Thyroid gland (tissue), 4 donors: ENCODE measurements at regions of chr22 and their contacts with region 1.

Region 1: DNA sequence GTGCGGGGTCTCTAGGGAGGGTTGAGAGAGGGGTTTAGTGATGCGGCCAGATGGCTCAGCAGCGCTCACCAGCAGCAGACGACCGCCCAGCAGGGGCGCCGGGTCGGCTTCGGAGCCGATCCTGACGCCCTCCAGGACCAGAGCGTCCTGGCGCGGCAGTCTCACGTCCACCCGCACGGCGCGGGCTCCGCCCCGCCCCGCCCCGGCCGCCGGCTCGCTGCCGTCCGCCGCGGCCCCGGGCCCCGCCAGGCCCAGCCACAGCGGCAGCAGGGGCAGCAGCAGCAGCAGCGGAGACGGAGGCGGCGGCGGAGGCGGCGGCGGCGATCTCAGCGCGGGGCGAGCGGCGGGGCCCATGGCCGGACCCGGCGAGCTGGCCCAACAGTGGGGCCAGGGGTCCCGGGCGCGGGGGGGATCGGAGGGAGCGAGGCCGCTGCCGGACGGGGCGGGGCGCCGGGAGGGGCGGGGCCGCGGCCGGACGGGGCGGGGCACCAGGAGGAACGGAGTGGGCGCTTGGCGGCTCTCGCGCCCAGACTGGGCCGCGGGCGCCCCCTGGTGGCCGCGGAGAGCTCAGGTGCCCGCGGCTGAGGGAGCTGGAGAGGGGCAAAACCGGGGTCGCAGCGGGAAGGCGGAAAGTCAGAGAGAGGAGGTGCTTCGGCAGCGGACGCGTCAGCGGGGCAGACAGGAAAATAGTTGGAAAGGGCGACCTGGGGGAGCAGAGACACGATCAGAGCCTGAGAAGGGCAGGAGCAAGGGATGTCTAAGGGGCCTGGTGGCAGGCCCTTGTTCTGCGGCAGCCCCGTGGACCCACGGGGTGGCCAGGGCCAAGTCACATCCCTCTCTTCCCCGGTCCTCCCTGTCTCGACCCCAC is at the start of gene RNF215:
- DNase-seq: peak; percentile 77 to 79
- H3K4me3 ChIP-seq: peak within 1 kb of the TSS in 1 of 3 donors; percentile 46
- H3K27ac ChIP-seq: peak within 1 kb of the TSS in 1 of 3 donors; percentile 15
- H3K4me1 ChIP-seq: peaks cover 7 to 13% of the 10 kb centered on the region in 2 donors
- H3K27me3 ChIP-seq: no peaks in the 10 kb centered on the region
- CTCF ChIP-seq: peak; percentile 69 to 99 (median 90)
- POLR2A ChIP-seq: peak in 1 of 2 donors; percentile 30
- total RNA-seq, gene RNF215: 14.8 to 25.5 (median 18.8) TPM

Region 2: DNA sequence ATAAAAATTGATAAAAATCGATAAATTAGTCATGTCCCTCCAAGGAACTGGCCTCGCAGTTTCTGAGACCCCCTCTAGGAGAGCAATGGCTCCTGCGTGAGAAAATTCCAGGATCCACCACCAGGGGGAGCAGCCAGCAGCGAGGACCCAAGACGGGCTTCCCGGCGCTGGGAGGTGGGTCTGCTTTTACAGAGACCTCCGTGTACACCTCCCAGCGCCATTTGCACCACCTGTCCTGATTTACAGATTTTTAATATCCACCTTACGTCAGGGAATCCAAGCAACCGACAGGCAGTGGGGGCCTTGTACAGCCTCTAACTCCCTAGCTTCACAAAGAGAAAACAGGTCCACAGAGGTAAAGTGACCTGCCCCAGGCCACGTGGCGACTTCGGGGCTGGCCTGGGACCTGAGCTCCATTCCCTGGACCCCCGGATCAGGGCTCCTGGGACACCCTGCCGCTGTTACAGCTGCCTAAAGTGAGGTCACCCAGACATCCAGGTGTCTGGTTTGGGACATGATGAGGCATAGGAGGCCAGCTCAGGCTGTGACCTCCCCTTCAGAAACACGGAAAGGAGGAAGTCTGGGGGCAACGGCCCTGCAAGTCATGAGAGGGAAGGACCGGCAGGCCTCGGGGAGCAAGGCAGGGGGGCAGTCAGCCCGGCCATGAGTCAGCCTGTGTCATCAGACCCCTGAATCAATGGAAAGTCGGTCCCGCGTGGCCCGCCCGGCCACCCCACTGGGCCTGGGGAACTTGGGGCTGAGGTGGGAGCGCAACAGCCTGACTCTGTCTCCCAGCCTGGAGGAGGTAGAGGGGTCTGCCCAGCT is 124.1 kb before region 1 on chr22:
- intact Hi-C with region 1: loop called (anchors 2 kb)
- DNase-seq: peak; percentile 68 to 70
- H3K4me3 ChIP-seq: no peak overlapping the region
- H3K27ac ChIP-seq: no peak overlapping the region
- H3K4me1 ChIP-seq: peaks cover 4 to 6% of the 10 kb centered on the region in 2 donors
- H3K27me3 ChIP-seq: no peaks in the 10 kb centered on the region
- CTCF ChIP-seq: peak; percentile 90 to 98 (median 95)
- POLR2A ChIP-seq: no peak

Region 3: DNA sequence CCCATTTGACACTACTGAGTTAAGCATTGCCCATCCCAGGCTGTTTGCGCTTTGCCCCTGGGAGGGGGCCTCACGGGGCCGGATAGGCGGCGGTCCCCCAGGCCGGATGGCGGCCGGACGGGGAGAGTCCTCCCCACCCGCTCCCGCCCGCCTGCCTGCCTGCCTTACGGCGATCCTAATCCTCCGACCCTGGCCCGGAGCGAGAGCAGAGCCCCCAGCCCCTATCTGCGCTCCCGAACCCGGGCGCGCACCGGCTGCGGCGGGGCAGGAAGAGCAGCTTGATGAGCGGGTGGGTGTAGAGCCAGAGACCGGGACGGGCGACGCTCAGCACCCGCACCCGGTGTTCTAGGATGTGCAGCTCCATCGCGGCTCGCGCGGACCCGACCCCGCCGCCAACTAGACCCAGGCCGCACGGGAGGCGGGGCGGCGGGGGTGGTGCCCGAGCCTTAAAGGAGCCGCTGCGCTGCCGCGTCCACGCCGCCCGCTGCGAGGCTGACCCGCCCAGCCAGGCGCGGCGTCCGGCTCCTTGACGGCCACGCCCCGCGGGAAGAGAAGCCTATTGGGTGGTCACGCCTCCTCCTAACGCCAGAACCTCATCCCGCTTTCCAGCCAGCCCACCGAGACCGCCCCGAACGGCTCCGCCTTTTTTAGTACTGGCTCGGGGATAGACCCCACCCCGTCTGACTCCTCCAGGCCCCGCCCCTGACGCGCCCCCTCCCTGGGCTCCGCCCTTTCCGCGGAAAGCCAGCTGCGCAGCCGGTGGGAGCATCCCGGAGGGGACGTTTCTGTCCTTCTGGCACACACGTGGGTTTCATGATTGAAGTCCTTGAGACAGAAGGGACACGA is 97.8 kb before region 1 on chr22 and contains the start of gene CASTOR1:
- intact Hi-C with region 1: loop called (anchors 1 kb)
- DNase-seq: peak; percentile 100
- H3K4me3 ChIP-seq: peak within 1 kb of the TSS; percentile 92 to 99 (median 96)
- H3K27ac ChIP-seq: peak within 1 kb of the TSS; percentile 96 to 97 (median 97)
- H3K4me1 ChIP-seq: peaks cover 33 to 38% of the 10 kb centered on the region in 2 donors
- H3K27me3 ChIP-seq: no peaks in the 10 kb centered on the region
- CTCF ChIP-seq: no peak
- POLR2A ChIP-seq: peak in 1 of 2 donors; percentile 87
- total RNA-seq, gene CASTOR1: 16.5 to 36.0 (median 27.7) TPM

Region 4: GRCh38 chr22:30326706-30327362 is 60.4 kb before region 1 on chr22 and contains the start of gene TBC1D10A:
- intact Hi-C with region 1: loop called (anchors 5 kb)
- DNase-seq: peak; percentile 97 to 99
- H3K4me3 ChIP-seq: peak within 1 kb of the TSS; percentile 44 to 99 (median 89)
- H3K27ac ChIP-seq: peak within 1 kb of the TSS; percentile 59 to 84 (median 59)
- H3K4me1 ChIP-seq: peaks cover 28 to 43% of the 10 kb centered on the region in 2 donors
- H3K27me3 ChIP-seq: no peaks in the 10 kb centered on the region
- CTCF ChIP-seq: peak in 1 of 6 experiments; percentile 1
- POLR2A ChIP-seq: peak; percentile 53 to 90
- total RNA-seq, gene TBC1D10A: 28.4 to 44.7 (median 35.9) TPM

Region 5: DNA sequence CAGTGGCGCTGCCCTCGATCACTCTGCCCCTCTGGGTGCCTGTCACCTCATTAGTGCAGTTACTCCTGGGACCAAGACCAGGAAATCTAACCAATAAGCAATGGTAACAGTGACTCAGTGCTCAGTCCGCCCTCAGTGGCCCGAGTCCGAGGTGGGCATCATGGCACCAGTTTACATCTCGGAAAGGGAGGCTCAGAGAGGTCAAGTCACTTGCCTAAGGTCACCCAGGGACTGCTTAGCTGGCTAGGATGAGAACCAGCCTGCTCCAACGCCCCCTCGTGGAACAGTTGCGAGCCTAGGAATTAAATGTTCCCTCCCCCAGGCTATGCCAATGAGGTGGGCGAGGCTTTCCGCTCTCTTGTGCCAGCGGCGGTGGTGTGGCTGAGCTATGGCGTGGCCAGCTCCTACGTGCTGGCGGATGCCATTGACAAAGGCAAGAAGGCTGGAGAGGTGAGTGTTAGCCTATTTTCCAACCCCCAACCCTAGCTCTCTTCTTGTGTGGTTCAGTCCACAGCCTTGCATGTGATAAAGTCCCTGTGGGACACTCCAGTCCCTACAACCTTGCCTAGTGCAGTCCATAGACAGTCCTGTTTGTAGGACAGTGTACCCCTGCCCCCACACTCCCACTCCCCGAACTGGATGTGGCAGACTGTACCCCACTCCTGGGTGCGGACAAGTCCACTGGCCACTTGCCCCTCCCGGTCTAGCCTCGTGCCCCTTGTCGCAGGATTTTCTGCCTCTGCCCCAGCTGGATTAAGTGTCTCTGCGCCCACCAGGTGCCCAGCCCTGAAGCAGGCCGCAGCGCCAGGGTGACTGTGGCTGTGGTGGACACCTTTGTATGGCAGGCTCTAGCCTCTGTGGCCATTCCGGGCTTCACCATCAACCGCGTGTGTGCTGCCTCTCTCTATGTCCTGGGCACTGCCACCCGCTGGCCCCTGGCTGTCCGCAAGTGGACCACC is 39.5 kb after region 1 on chr22:
- intact Hi-C with region 1: loop called (anchors 5 kb)
- DNase-seq: peak; percentile 90 to 92
- H3K4me3 ChIP-seq: peak overlapping the region in 2 of 3 donors; percentile 62 to 82
- H3K27ac ChIP-seq: peak overlapping the region; percentile 71 to 86 (median 78)
- H3K4me1 ChIP-seq: peaks cover 25 to 38% of the 10 kb centered on the region in 2 donors
- H3K27me3 ChIP-seq: no peaks in the 10 kb centered on the region
- CTCF ChIP-seq: peak in 4 of 6 experiments; percentile 73 to 81 (median 79)
- POLR2A ChIP-seq: peak in 1 of 2 donors; percentile 19

Region 6: GRCh38 chr22:30485362-30485988 is 98.3 kb after region 1 on chr22:
- intact Hi-C with region 1: loop called (anchors 5 kb)
- DNase-seq: peak; percentile 57 to 66
- H3K4me3 ChIP-seq: no peak overlapping the region
- H3K27ac ChIP-seq: no peak overlapping the region
- H3K4me1 ChIP-seq: no peaks in the 10 kb centered on the region
- H3K27me3 ChIP-seq: no peaks in the 10 kb centered on the region
- CTCF ChIP-seq: peak; percentile 87 to 98 (median 93)
- POLR2A ChIP-seq: no peak